ENCODE measurements at regions of chr18 and their contacts with region 1.

Region 1: GRCh38 chr18:36757081-36757480 is 71.7 kb downstream of the TPGS2 start:
- DNase-seq: no peak
- H3K4me3 ChIP-seq: no peak overlapping the region
- H3K27ac ChIP-seq: no peak overlapping the region
- H3K4me1 ChIP-seq: peaks cover 34% of the 10 kb centered on the region
- H3K27me3 ChIP-seq: no peaks in the 10 kb centered on the region
- CTCF ChIP-seq: peak; percentile 69

Region 2: DNA sequence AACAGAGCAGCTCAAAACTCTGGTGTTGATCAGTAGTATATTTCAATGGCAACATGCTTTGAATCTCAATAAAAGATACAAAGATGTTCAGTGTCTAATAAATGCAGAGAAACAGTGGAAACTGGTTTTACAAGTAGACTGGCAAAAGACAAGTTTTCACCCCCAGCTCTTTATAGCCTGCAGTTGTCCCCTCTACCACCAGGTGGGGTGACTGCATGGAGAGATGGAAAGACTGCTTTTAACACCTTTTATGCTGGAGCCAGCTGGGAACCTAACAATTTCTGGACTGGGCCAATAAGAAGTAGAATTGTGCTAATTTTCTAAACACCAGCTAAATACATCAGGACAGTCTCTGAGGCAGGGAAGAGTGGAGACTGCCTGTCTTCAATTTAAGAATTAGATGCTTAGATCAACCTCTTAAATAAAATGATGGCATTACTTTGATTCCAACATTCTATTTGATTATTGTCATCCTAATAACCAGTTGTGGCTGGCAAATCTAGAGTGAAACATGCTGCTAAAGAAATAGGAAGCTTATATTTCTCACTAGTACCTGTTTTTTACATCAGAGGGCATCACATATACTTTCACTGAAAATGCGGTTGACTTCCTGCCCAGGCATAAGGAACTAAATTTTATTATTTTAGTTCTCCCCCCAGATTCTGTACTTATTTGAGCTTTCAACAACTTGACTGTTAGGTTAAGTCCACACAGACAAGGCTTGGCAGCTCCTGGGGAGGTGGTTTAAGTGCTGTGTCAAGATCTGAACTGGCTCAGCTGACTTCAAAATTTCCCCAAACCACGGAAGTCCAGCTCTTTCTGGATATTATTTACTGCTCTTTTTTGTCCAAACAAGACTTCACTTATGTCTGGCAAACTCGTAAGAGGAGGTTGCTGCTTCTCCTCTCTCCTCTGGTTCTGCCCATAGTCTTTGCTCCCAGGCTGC is 68.8 kb before region 1 on chr18:
- intact Hi-C with region 1: loop called (anchors 5 kb)
- DNase-seq: no peak
- H3K4me3 ChIP-seq: no peak overlapping the region
- H3K27ac ChIP-seq: no peak overlapping the region
- H3K4me1 ChIP-seq: peaks cover 10% of the 10 kb centered on the region
- H3K27me3 ChIP-seq: no peaks in the 10 kb centered on the region
- CTCF ChIP-seq: peak; percentile 88

Region 3: GRCh38 chr18:36706134-36706881 is 50.8 kb before region 1 on chr18:
- intact Hi-C with region 1: no loop called
- DNase-seq: no peak
- H3K4me3 ChIP-seq: no peak overlapping the region
- H3K27ac ChIP-seq: no peak overlapping the region
- H3K4me1 ChIP-seq: peaks cover 72% of the 10 kb centered on the region
- H3K27me3 ChIP-seq: no peaks in the 10 kb centered on the region
- CTCF ChIP-seq: no peak

Region 4: GRCh38 chr18:36809590-36810381 is 52.7 kb after region 1 on chr18:
- intact Hi-C with region 1: loop called (anchors 10 kb)
- DNase-seq: no peak
- H3K4me3 ChIP-seq: no peak overlapping the region
- H3K27ac ChIP-seq: no peak overlapping the region
- H3K4me1 ChIP-seq: peaks cover 20% of the 10 kb centered on the region
- H3K27me3 ChIP-seq: no peaks in the 10 kb centered on the region
- CTCF ChIP-seq: peak; percentile 86

Region 5: GRCh38 chr18:36993068-36993467 is 236.0 kb after region 1 on chr18:
- intact Hi-C with region 1: no loop called
- DNase-seq: no peak
- H3K4me3 ChIP-seq: no peak overlapping the region
- H3K27ac ChIP-seq: no peak overlapping the region
- H3K4me1 ChIP-seq: no peaks in the 10 kb centered on the region
- H3K27me3 ChIP-seq: no peaks in the 10 kb centered on the region
- CTCF ChIP-seq: no peak